IMR-90 (cell line): ENCODE measurements at regions of chr18 and their contacts with region 1.

Region 1: GRCh38 chr18:21293479-21293878 is 51.4 kb downstream of the GREB1L start:
- DNase-seq: no peak
- ATAC-seq: no peak
- H3K4me3 ChIP-seq: no peak overlapping the region
- H3K27ac ChIP-seq: no peak overlapping the region
- H3K4me1 ChIP-seq: no peaks in the 10 kb centered on the region
- H3K27me3 ChIP-seq: no peaks in the 10 kb centered on the region; the same call in 1 of the 2 replicates
- CTCF ChIP-seq: no peak
- POLR2A ChIP-seq: no peak
- RAD21 ChIP-seq: no peak

Region 2: GRCh38 chr18:21264651-21265050 is 28.8 kb before region 1 on chr18:
- CTCF ChIA-PET with region 1: no interaction called
- POLR2A ChIA-PET with region 1: no interaction called
- dilution Hi-C with region 1: no loop called
- in situ Hi-C with region 1: no loop called
- intact Hi-C with region 1: no loop called
- DNase-seq: no peak
- ATAC-seq: no peak
- H3K4me3 ChIP-seq: no peak overlapping the region
- H3K27ac ChIP-seq: no peak overlapping the region
- H3K4me1 ChIP-seq: no peaks in the 10 kb centered on the region
- H3K27me3 ChIP-seq: peaks cover 6% of the 10 kb centered on the region; the same call in 1 of the 2 replicates
- CTCF ChIP-seq: no peak
- POLR2A ChIP-seq: no peak
- RAD21 ChIP-seq: no peak

Region 3: GRCh38 chr18:21335927-21336488 is 42.5 kb after region 1 on chr18:
- CTCF ChIA-PET with region 1: no interaction called
- POLR2A ChIA-PET with region 1: no interaction called
- dilution Hi-C with region 1: no loop called
- in situ Hi-C with region 1: no loop called
- intact Hi-C with region 1: loop called (anchors 1 kb)
- DNase-seq: peak; percentile 2
- ATAC-seq: peak; percentile 27; the same call in 1 of the 2 replicates
- H3K4me3 ChIP-seq: no peak overlapping the region
- H3K27ac ChIP-seq: no peak overlapping the region
- H3K4me1 ChIP-seq: no peaks in the 10 kb centered on the region
- H3K27me3 ChIP-seq: peaks cover 4% of the 10 kb centered on the region; the same call in 1 of the 2 replicates
- CTCF ChIP-seq: no peak
- POLR2A ChIP-seq: no peak
- RAD21 ChIP-seq: no peak